Naive thymus-derived CD4-positive, alpha-beta T cell (primary cell): ENCODE measurements at regions of chr5 and their contacts with region 1.

Region 1: GRCh38 chr5:34898258-34898895 is 16.9 kb downstream of the RAD1 start:
- DNase-seq: peak; percentile 21 to 64 (median 50)
- ATAC-seq: peak; percentile 80
- H3K4me3 ChIP-seq: no peak overlapping the region
- H3K4me3 Mint-ChIP-seq: no peak overlapping the region
- H3K27ac ChIP-seq: no peak overlapping the region
- H3K27ac Mint-ChIP-seq: no peak overlapping the region
- H3K4me1 ChIP-seq: no peaks in the 10 kb centered on the region
- H3K4me1 Mint-ChIP-seq: no peaks in the 10 kb centered on the region
- H3K27me3 ChIP-seq: no peaks in the 10 kb centered on the region
- H3K27me3 Mint-ChIP-seq: no peaks in the 10 kb centered on the region

Region 2: DNA sequence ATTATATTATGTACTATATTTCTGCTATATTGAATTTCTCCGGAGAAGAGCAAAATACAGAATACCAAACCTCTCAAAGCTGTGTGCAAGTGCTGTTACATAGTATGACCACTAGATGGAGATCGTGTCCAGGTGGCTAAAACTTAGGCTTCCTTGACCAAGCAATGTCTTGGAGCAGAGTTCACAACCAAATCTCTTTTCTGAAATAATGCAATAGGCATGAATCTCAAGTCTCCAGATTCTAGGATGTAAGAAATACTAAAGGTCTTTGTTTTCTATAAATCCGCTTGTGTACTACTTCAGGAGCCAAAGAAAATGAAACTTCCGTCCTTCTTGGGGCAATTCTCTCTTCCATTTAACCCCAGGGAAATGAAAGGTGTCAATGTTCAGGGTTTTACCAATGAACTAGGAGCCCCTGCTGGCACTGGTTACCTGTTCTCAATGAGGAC is 423.8 kb before region 1 on chr5:
- CTCF ChIA-PET with region 1: interaction called, 3 read pairs
- POLR2A ChIA-PET with region 1: no interaction called
- intact Hi-C with region 1: loop called (anchors 1 kb)
- DNase-seq: peak in 5 of 9 donors; percentile 10 to 27 (median 24)
- ATAC-seq: peak; percentile 71
- H3K4me3 ChIP-seq: no peak overlapping the region
- H3K4me3 Mint-ChIP-seq: no peak overlapping the region
- H3K27ac ChIP-seq: no peak overlapping the region
- H3K27ac Mint-ChIP-seq: no peak overlapping the region
- H3K4me1 ChIP-seq: no peaks in the 10 kb centered on the region
- H3K4me1 Mint-ChIP-seq: peaks cover 0 to 10% (median 0%) of the 10 kb centered on the region in 7 donors
- H3K27me3 ChIP-seq: no peaks in the 10 kb centered on the region
- H3K27me3 Mint-ChIP-seq: peaks cover 0 to 18% (median 7%) of the 10 kb centered on the region in 5 donors

Region 3: DNA sequence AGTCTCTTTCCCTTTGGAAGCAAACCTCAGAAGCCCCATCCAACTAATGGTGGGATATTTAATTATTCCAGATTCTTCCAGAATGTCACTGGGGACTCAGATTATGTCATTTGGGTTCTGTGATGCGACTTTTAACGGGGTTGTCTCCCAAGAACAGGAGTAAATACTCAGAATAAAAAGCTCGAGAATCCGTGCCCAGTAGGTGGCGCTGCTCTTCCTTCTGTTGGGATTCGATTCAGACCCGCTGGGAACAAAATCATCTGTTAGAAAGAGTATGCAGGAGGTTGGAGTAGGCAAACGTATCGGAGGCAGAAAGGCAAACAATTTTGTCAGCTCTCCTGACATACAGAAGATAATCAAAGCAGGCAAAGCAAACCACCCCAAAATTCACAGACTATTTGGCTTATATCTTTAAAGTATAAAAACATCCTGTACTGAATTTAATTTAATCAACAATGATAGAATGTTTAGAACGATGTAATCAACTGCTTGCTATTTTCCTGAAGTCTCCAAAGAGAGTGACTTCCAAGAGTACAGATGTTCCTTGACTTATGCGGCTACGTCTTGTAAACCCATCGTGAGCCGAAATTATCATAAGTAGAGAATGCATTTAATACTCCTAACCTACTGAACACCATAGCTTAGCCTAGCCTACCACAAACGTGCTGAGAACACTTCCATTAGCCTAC is 412.1 kb before region 1 on chr5:
- CTCF ChIA-PET with region 1: interaction called, 11 read pairs
- POLR2A ChIA-PET with region 1: no interaction called
- intact Hi-C with region 1: loop called (anchors 1 kb)
- DNase-seq: peak; percentile 10 to 61 (median 47)
- ATAC-seq: peak; percentile 63
- H3K4me3 ChIP-seq: no peak overlapping the region
- H3K4me3 Mint-ChIP-seq: no peak overlapping the region
- H3K27ac ChIP-seq: no peak overlapping the region
- H3K27ac Mint-ChIP-seq: no peak overlapping the region
- H3K4me1 ChIP-seq: no peaks in the 10 kb centered on the region
- H3K4me1 Mint-ChIP-seq: peaks cover 0 to 6% (median 4%) of the 10 kb centered on the region in 7 donors
- H3K27me3 ChIP-seq: no peaks in the 10 kb centered on the region
- H3K27me3 Mint-ChIP-seq: peaks cover 15 to 37% (median 33%) of the 10 kb centered on the region in 5 donors

Region 4: GRCh38 chr5:34522599-34523386 is 375.6 kb before region 1 on chr5:
- CTCF ChIA-PET with region 1: interaction called, 35 read pairs
- POLR2A ChIA-PET with region 1: no interaction called
- intact Hi-C with region 1: loop called (anchors 1 kb)
- DNase-seq: peak in 7 of 9 donors; percentile 11 to 50 (median 38)
- ATAC-seq: peak; percentile 66
- H3K4me3 ChIP-seq: no peak overlapping the region
- H3K4me3 Mint-ChIP-seq: no peak overlapping the region
- H3K27ac ChIP-seq: no peak overlapping the region
- H3K27ac Mint-ChIP-seq: no peak overlapping the region
- H3K4me1 ChIP-seq: no peaks in the 10 kb centered on the region
- H3K4me1 Mint-ChIP-seq: peaks cover 0 to 4% (median 0%) of the 10 kb centered on the region in 7 donors
- H3K27me3 ChIP-seq: no peaks in the 10 kb centered on the region
- H3K27me3 Mint-ChIP-seq: peaks cover 4 to 6% (median 4%) of the 10 kb centered on the region in 5 donors

Region 5: GRCh38 chr5:34656001-34656699 is 242.2 kb before region 1 on chr5 and contains the start of gene RAI14:
- CTCF ChIA-PET with region 1: no interaction called
- POLR2A ChIA-PET with region 1: no interaction called
- intact Hi-C with region 1: loop called (anchors 10 kb)
- DNase-seq: peak in 4 of 9 donors; percentile 11 to 44 (median 16)
- ATAC-seq: peak; percentile 27
- H3K4me3 ChIP-seq: peak within 1 kb of the TSS; percentile 57
- H3K4me3 Mint-ChIP-seq: peak within 1 kb of the TSS; percentile 80 to 100 (median 94)
- H3K27ac ChIP-seq: peak within 1 kb of the TSS; percentile 42
- H3K27ac Mint-ChIP-seq: peak within 1 kb of the TSS; percentile 34 to 92 (median 83)
- H3K4me1 ChIP-seq: peaks cover 3 to 8% of the 10 kb centered on the region in 2 donors
- H3K4me1 Mint-ChIP-seq: peaks cover 12 to 29% (median 22%) of the 10 kb centered on the region in 7 donors
- H3K27me3 ChIP-seq: peaks cover 3 to 8% of the 10 kb centered on the region in 2 donors
- H3K27me3 Mint-ChIP-seq: peaks cover 24 to 69% (median 34%) of the 10 kb centered on the region in 5 donors
- total RNA-seq, gene RAI14: 0.32 to 0.98 (median 0.89) TPM in 3 of 5 experiments, not detected in the others

Region 6: DNA sequence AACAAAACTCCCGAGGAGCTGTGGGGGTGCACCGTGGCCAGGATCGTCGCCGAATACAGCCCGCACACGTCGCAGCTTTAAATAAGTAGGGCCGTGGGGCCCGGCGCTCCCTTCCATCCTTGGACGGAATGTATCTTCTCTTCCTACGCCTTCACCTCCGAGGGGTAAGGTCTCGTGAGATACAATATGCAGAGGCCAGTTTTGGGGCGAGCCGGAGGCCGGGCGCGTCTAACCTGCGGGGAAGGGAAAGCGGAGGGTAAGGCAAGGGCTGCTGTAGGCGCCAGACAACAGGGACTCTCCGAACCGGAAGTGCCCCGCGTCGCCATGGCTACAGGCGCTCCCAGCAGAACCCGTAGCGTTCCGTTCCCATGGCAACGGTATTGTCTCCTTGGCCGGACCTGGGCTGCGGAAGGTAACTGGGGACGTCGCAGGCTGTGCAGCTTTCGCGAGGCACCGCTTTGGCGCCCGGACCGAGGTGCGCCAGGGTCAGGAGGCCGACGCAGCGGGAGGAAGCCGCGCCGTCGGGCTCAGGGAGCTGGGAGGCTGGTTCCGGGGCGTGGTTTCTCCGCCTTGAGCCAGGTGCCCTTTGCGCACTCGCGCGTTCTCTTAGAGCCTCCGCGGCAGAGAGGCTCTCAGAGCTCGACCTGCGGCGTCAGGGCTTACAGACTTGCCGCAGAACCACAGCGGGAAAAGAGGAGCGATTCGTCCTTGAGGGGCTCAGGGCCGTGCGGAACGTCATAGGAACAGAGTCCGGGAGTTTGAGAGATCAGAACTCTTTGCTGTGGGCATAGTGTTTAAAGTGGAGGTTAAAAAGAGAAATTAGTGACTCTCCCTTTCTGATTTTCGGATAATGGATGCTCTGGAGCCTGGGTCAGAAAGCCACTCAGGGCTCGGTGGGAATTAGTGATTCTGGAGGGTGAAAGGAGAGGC is 59.3 kb before region 1 on chr5 and contains the start of gene TTC23L:
- CTCF ChIA-PET with region 1: interaction called, 6 read pairs
- POLR2A ChIA-PET with region 1: no interaction called
- intact Hi-C with region 1: loop called (anchors 1 to 5 kb)
- DNase-seq: peak; percentile 82 to 95 (median 90)
- ATAC-seq: peak; percentile 94
- H3K4me3 ChIP-seq: peak within 1 kb of the TSS; percentile 85
- H3K4me3 Mint-ChIP-seq: peak within 1 kb of the TSS; percentile 79 to 97 (median 92)
- H3K27ac ChIP-seq: peak within 1 kb of the TSS; percentile 78
- H3K27ac Mint-ChIP-seq: peak within 1 kb of the TSS; percentile 83 to 99 (median 94)
- H3K4me1 ChIP-seq: peaks cover 0 to 4% of the 10 kb centered on the region in 2 donors
- H3K4me1 Mint-ChIP-seq: peaks cover 6 to 16% (median 10%) of the 10 kb centered on the region in 7 donors
- H3K27me3 ChIP-seq: no peaks in the 10 kb centered on the region
- H3K27me3 Mint-ChIP-seq: peaks cover 0 to 9% (median 0%) of the 10 kb centered on the region in 5 donors
- total RNA-seq, gene TTC23L: 0.57 to 1.9 (median 1.00) TPM in 3 of 5 experiments, not detected in the others

Region 7: DNA sequence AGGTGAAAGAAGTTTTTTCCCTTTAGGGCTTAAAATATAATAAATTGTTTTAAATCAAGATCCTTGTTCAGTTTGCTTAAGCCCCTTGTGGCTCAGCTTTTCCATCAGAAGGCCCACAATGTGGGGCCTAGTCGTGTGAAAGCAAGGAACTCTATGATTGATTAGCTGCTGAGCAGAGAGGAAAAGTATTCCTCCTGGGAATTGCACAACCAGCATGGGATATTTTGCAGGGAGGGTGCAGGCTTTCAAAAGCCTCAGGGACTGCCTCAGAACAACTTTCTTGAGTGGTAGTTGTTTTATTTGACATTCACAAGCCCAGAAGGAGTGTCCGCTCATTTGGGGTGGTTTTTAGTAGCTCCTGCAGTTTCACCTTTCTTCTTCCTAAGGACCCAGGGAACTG is 39.6 kb before region 1 on chr5:
- CTCF ChIA-PET with region 1: no interaction called
- POLR2A ChIA-PET with region 1: no interaction called
- intact Hi-C with region 1: no loop called
- DNase-seq: no peak
- ATAC-seq: no peak
- H3K4me3 ChIP-seq: no peak overlapping the region
- H3K4me3 Mint-ChIP-seq: no peak overlapping the region
- H3K27ac ChIP-seq: no peak overlapping the region
- H3K27ac Mint-ChIP-seq: no peak overlapping the region
- H3K4me1 ChIP-seq: no peaks in the 10 kb centered on the region
- H3K4me1 Mint-ChIP-seq: no peaks in the 10 kb centered on the region
- H3K27me3 ChIP-seq: no peaks in the 10 kb centered on the region
- H3K27me3 Mint-ChIP-seq: no peaks in the 10 kb centered on the region